Adrenal gland (tissue), 19 donors: ENCODE measurements at regions of chr3 and their contacts with region 1.

Region 1: DNA sequence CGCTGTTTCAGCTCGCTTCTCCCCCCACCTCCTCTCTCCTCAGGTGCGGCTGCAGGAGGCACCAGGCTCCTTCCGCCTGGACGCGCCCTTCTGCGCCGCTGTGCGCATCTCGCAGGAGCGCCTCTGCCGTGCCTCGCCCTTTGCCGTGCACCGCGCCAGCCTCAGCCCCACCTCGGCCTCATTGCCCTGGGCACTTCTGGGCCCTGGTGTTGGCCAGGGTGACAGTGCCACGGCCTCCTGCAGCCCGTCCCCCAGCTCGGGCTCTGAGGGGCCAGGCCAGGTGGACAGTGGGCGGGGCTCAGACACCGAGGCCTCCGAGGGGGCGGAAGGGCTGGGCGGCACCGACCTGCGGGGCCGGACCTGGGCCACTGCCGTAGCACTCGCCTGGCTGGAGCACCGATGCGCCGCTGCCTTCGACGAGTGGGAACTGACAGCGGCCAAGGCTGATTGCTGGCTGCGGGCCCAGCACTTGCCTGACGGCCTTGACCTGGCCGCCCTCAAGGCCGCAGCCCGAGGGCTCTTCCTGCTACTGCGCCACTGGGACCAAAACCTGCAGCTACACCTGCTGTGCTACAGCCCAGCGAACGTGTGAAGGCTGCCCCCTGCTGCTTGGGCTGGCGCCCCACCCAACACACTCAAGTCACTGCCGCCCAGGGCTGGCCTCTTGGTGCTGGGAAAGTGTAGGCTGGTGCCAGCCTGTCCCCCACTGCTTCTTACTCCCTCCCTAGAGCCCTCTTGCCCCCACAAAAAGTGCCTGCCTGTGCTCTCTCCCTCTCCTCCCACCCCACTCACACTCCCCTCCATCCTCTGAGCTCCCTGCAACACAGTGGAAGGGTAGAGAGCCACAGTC is 7.1 kb downstream of the ALG3 start:
- DNase-seq: peak; percentile 75 to 91 (median 86)
- H3K4me3 ChIP-seq: peak overlapping the region in 1 of 4 donors; percentile 23
- H3K27ac ChIP-seq: peak overlapping the region in 2 of 5 donors; percentile 66 to 67
- H3K4me1 ChIP-seq: peaks cover 0 to 20% of the 10 kb centered on the region in 2 donors
- H3K27me3 ChIP-seq: no peaks in the 10 kb centered on the region
- CTCF ChIP-seq: peak; percentile 38 to 80 (median 73)
- POLR2A ChIP-seq: peak in 1 of 2 donors; percentile 25

Region 2: GRCh38 chr3:183912895-183913579 is 328.6 kb before region 1 on chr3:
- intact Hi-C with region 1: no loop called
- DNase-seq: peak in 2 of 7 donors; percentile 4 to 16
- H3K4me3 ChIP-seq: no peak overlapping the region
- H3K27ac ChIP-seq: no peak overlapping the region
- H3K4me1 ChIP-seq: no peaks in the 10 kb centered on the region
- H3K27me3 ChIP-seq: no peaks in the 10 kb centered on the region
- CTCF ChIP-seq: no peak
- POLR2A ChIP-seq: no peak

Region 3: GRCh38 chr3:184145111-184145524 is 96.6 kb before region 1 on chr3:
- intact Hi-C with region 1: loop called in 1 of 2 experiments (anchors 5 kb)
- DNase-seq: peak; percentile 42 to 82 (median 59)
- H3K4me3 ChIP-seq: no peak overlapping the region
- H3K27ac ChIP-seq: peak overlapping the region in 1 of 5 donors; percentile 32
- H3K4me1 ChIP-seq: peaks cover 0 to 6% of the 10 kb centered on the region in 2 donors
- H3K27me3 ChIP-seq: no peaks in the 10 kb centered on the region
- CTCF ChIP-seq: peak in 5 of 6 experiments; percentile 37 to 56 (median 49)
- POLR2A ChIP-seq: no peak

Region 4: GRCh38 chr3:184543843-184544512 is 302.3 kb after region 1 on chr3:
- intact Hi-C with region 1: no loop called
- DNase-seq: peak; percentile 75 to 90 (median 82)
- H3K4me3 ChIP-seq: no peak overlapping the region
- H3K27ac ChIP-seq: no peak overlapping the region
- H3K4me1 ChIP-seq: peaks cover 0 to 5% of the 10 kb centered on the region in 2 donors
- H3K27me3 ChIP-seq: peaks cover 5% of the 10 kb centered on the region
- CTCF ChIP-seq: peak; percentile 88 to 95 (median 91)
- POLR2A ChIP-seq: no peak